ENCODE measurements at regions of chr1 and their contacts with region 1.

Region 1: GRCh38 chr1:180482425-180483275 is 19.7 kb downstream of the ACBD6 start:
- DNase-seq: peak in 11 of 42 donors; percentile 16 to 68 (median 42)

Region 2: DNA sequence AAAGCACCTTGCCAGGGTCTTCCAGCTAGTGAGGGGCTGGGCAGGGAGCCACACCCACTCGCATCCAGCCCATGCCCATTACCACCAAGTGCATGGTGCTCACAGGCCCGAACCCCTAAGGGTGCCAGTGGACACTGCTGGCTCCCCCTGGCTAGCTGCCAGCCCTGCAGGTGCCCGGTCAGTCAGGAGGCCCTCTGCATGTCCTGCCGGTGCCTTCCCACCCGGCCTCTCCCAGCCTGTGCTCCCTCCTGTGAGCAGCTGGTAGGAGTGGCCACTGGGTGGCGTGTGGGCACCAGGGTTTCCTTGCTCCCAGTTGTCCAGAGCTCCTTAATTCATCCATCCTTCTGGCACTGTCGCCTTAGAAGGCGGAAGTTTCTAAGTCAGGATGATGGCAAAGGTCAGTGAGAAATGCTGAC is 294.6 kb before region 1 on chr1:
- intact Hi-C with region 1: loop called (anchors 10 kb)
- DNase-seq: peak in 39 of 42 donors; percentile 28 to 70 (median 50)

Region 3: DNA sequence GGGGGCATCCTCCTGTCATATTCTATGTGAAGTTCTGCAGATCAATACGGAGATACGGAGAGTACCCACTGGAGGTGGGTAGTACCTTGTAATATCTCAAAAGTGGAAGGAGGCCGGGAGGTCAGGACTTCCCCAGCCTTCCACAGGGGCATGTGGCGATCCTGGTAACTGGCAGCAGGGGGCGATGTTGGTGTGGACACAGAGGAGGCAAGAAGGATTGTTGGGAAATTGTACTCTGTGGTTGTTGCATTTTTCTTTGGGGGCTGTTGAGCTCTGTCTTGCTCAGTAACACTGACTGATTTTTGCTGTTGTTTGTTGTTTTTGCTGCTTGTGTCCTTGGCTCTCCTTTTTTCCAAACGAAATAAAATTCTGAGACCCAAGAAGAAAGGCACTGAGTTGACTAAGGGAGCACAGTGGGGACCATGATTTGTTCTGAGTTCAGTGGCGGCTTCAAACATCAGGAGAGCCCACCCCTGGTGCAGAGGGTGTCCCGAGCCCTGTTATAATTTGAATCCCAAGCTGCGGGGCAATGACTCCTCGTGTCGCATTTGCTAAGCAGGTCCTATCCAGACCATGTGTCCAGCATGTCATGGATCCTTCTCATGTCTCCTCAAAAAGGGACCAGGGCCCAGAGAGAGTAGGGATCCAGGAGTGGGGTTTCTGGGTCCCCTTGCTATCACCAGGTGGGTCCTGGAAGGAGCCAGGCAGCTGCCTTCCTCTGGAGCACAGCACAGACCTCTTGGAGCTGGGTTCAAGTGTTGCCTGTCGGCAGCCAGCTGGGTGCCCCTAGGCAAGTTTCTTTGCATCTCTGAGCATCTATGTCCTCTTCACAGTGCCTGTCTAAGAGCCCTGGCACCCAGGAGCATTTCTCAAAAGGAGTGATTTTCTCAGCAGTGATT is 229.8 kb before region 1 on chr1:
- intact Hi-C with region 1: loop called (anchors 10 kb)
- DNase-seq: peak in 40 of 42 donors; percentile 19 to 82 (median 62)

Region 4: GRCh38 chr1:180424848-180425457 is 57.7 kb before region 1 on chr1:
- intact Hi-C with region 1: no loop called
- DNase-seq: no peak

Region 5: GRCh38 chr1:180515864-180516388 is 33.3 kb after region 1 on chr1:
- intact Hi-C with region 1: no loop called
- DNase-seq: peak; percentile 31 to 91 (median 72)

Measured in head of caudate nucleus (tissue), 42 donors.